H1 (cell line): ENCODE measurements at regions of chr6 and their contacts with region 1.

Region 1: GRCh38 chr6:81075974-81076373 is 676.5 kb downstream of the TENT5A start:
- DNase-seq: no peak
- H3K4me3 ChIP-seq: no peak overlapping the region
- H3K27ac ChIP-seq: no peak overlapping the region
- H3K4me1 ChIP-seq: 0 out of 7 replicates have a peak, but pooled peaks cover 0 to 2% (median 0%) of the 10 kb centered on the region in 4 experiments
- H3K27me3 ChIP-seq: no peaks in the 10 kb centered on the region
- CTCF ChIP-seq: peak in 2 of 3 experiments; percentile 57 to 80; a peak in 3 of 4 replicates
- EP300 ChIP-seq: no peak
- POLR2A ChIP-seq: no peak
- RAD21 ChIP-seq: peak; percentile 70 to 76

Region 2: GRCh38 chr6:81051952-81052351 is 24.0 kb before region 1 on chr6:
- CTCF ChIA-PET with region 1: interaction called, 13 read pairs
- POLR2A ChIA-PET with region 1: no interaction called
- DNase-seq: peak in 1 of 2 experiments; percentile 46
- H3K4me3 ChIP-seq: no peak overlapping the region
- H3K27ac ChIP-seq: no peak overlapping the region
- H3K4me1 ChIP-seq: no peaks in the 10 kb centered on the region
- H3K27me3 ChIP-seq: no peaks in the 10 kb centered on the region
- CTCF ChIP-seq: peak in 2 of 3 experiments; percentile 21 to 35; a peak in 2 of 4 replicates
- EP300 ChIP-seq: no peak
- POLR2A ChIP-seq: no peak
- RAD21 ChIP-seq: peak; percentile 10 to 21; a peak in 2 of 4 replicates